Caco-2 (cell line): ENCODE measurements at regions of chr11 and their contacts with region 1.

Region 1: GRCh38 chr11:122202951-122203456 is 87.0 kb upstream of the BLID start:
- DNase-seq: peak; percentile 59 to 82
- H3K4me3 ChIP-seq: no peak overlapping the region
- H3K4me3 Mint-ChIP-seq: peak overlapping the region; percentile 43
- H3K27ac Mint-ChIP-seq: no peak overlapping the region
- H3K4me1 ChIP-seq: peaks cover 9% of the 10 kb centered on the region
- H3K4me1 Mint-ChIP-seq: peaks cover 9% of the 10 kb centered on the region
- H3K27me3 ChIP-seq: peaks cover 2% of the 10 kb centered on the region
- H3K27me3 Mint-ChIP-seq: peaks cover 29% of the 10 kb centered on the region
- CTCF ChIP-seq: peak; percentile 98 to 99

Region 2: DNA sequence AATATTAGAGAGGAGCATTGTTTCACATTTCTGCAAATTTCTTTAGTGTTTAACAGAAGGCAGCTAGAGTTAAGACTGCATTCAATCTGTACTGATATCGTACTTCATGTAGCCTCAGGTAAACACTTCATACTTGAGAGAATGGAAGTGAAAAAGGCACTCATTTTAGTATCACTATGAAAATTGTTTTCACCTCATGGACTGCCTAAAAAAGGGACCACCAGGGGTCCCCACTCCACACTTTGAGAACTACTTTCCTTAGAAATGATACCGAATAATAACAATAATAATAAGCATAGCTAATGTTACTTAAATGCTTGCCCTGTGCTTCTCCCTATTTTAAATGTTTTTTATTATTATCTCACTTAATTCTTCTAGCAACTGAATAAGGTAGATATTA is 182.1 kb before region 1 on chr11:
- CTCF ChIA-PET with region 1: no interaction called
- POLR2A ChIA-PET with region 1: no interaction called
- intact Hi-C with region 1: loop called (anchors 1 kb)
- DNase-seq: peak in 1 of 2 experiments; percentile 22
- H3K4me3 ChIP-seq: no peak overlapping the region
- H3K4me3 Mint-ChIP-seq: no peak overlapping the region
- H3K27ac Mint-ChIP-seq: no peak overlapping the region
- H3K4me1 ChIP-seq: no peaks in the 10 kb centered on the region
- H3K4me1 Mint-ChIP-seq: no peaks in the 10 kb centered on the region
- H3K27me3 ChIP-seq: no peaks in the 10 kb centered on the region; the same call in 1 of the 2 replicates
- H3K27me3 Mint-ChIP-seq: peaks cover 3% of the 10 kb centered on the region
- CTCF ChIP-seq: peak; percentile 58 to 60

Region 3: DNA sequence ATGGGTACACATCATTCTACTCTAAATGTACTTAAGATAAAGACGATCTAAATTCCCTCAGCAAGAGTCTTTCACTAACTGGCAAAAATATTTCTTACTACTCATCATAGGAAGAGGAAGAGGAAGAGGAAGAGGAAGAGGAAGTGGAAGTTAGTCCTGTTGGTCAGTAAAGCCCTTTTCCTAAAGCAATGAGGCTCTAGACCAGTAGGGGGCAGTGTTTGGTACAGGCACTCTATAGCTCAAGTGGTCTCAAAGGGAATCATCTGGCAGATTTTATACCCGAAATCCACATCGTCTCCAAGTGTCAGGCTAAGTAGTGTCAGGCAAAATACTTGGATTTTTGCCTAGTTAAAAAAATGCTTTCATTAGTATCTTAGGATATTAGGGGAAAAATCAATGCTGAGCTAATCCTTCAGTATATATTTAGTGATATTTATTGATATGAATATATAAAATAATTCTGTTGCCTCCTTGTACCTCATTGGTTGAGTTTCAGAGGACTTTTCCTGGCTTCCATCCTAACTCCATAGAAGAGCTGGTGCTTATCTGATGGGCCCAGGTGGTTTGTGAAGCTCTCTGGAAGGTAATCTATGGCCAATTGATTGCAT is 94.7 kb before region 1 on chr11:
- CTCF ChIA-PET with region 1: interaction called, 4 read pairs
- POLR2A ChIA-PET with region 1: no interaction called
- intact Hi-C with region 1: loop called (anchors 2 kb)
- DNase-seq: peak in 1 of 2 experiments; percentile 53
- H3K4me3 ChIP-seq: no peak overlapping the region
- H3K4me3 Mint-ChIP-seq: no peak overlapping the region
- H3K27ac Mint-ChIP-seq: no peak overlapping the region
- H3K4me1 ChIP-seq: no peaks in the 10 kb centered on the region
- H3K4me1 Mint-ChIP-seq: no peaks in the 10 kb centered on the region
- H3K27me3 ChIP-seq: peaks cover 2% of the 10 kb centered on the region
- H3K27me3 Mint-ChIP-seq: peaks cover 26% of the 10 kb centered on the region
- CTCF ChIP-seq: peak; percentile 54 to 64

Region 4: GRCh38 chr11:122115524-122116379 is 87.3 kb before region 1 on chr11 and contains the start of gene BLID:
- CTCF ChIA-PET with region 1: no interaction called
- POLR2A ChIA-PET with region 1: no interaction called
- intact Hi-C with region 1: loop called (anchors 2 kb)
- DNase-seq: peak; percentile 62 to 65
- H3K4me3 ChIP-seq: no peak within 1 kb of the TSS
- H3K4me3 Mint-ChIP-seq: no peak within 1 kb of the TSS
- H3K27ac Mint-ChIP-seq: no peak within 1 kb of the TSS
- H3K4me1 ChIP-seq: no peaks in the 10 kb centered on the region
- H3K4me1 Mint-ChIP-seq: no peaks in the 10 kb centered on the region
- H3K27me3 ChIP-seq: no peaks in the 10 kb centered on the region
- H3K27me3 Mint-ChIP-seq: peaks cover 24% of the 10 kb centered on the region
- CTCF ChIP-seq: peak; percentile 67 to 89
- total RNA-seq, gene BLID: not detected in 2 replicates